ENCODE measurements at regions of chr9 and their contacts with region 1.

Region 1: GRCh38 chr9:97710356-97711222 is 13.4 kb upstream of the XPA start:
- DNase-seq: peak; percentile 44
- ATAC-seq: peak; percentile 92
- H3K4me3 ChIP-seq: no peak overlapping the region
- H3K27ac ChIP-seq: no peak overlapping the region
- H3K4me1 ChIP-seq: peaks cover 26% of the 10 kb centered on the region
- H3K27me3 ChIP-seq: no peaks in the 10 kb centered on the region
- CTCF ChIP-seq: peak; percentile 87
- EP300 ChIP-seq: no peak
- POLR2A ChIP-seq: no peak
- RAD21 ChIP-seq: peak; percentile 88

Region 2: DNA sequence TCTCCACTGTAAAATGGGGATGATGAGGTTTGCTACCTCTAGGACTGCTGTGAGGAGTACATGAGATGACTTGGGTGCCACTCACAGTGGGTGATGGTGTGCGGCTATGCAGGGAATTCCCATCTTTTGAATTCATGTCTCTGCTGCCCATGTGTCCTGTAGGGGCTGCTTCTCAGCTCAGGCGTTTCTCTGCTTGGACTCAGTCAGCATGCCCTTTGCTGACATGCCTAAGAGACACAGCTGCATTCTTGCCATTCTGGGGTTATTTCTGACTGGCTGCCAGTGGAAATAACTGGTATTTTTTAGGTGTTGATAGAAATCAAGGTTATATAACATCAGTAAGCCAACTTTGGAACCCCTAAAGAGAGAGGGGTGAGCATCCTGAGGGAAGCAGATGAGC is 10.8 kb after region 1 on chr9:
- CTCF ChIA-PET with region 1: no interaction called
- POLR2A ChIA-PET with region 1: no interaction called
- in situ Hi-C with region 1: no loop called
- intact Hi-C with region 1: no loop called
- DNase-seq: no peak
- ATAC-seq: no peak
- H3K4me3 ChIP-seq: no peak overlapping the region
- H3K27ac ChIP-seq: no peak overlapping the region
- H3K4me1 ChIP-seq: peaks cover 12% of the 10 kb centered on the region
- H3K27me3 ChIP-seq: no peaks in the 10 kb centered on the region
- CTCF ChIP-seq: no peak
- EP300 ChIP-seq: no peak
- POLR2A ChIP-seq: no peak
- RAD21 ChIP-seq: no peak

Region 3: GRCh38 chr9:97803167-97804058 is 92.8 kb after region 1 on chr9:
- CTCF ChIA-PET with region 1: interaction called, 5 read pairs
- POLR2A ChIA-PET with region 1: no interaction called
- in situ Hi-C with region 1: no loop called
- intact Hi-C with region 1: loop called (anchors 1 kb)
- DNase-seq: peak; percentile 33
- ATAC-seq: peak; percentile 95
- H3K4me3 ChIP-seq: peak overlapping the region; percentile 50 to 72 (median 55)
- H3K27ac ChIP-seq: no peak overlapping the region
- H3K4me1 ChIP-seq: peaks cover 14% of the 10 kb centered on the region
- H3K27me3 ChIP-seq: peaks cover 0 to 5% of the 10 kb centered on the region in 2 experiments; a peak in 3 of 5 replicates
- CTCF ChIP-seq: peak; percentile 42
- EP300 ChIP-seq: no peak
- POLR2A ChIP-seq: peak in 1 of 2 experiments; percentile 60; a peak in 2 of 4 replicates
- RAD21 ChIP-seq: peak; percentile 51

Region 4: GRCh38 chr9:97890038-97890437 is 179.4 kb after region 1 on chr9:
- CTCF ChIA-PET with region 1: no interaction called
- POLR2A ChIA-PET with region 1: no interaction called
- in situ Hi-C with region 1: loop called (anchors 5 kb)
- intact Hi-C with region 1: loop called (anchors 1 kb)
- DNase-seq: no peak
- ATAC-seq: peak; percentile 72
- H3K4me3 ChIP-seq: no peak overlapping the region
- H3K27ac ChIP-seq: no peak overlapping the region
- H3K4me1 ChIP-seq: no peaks in the 10 kb centered on the region
- H3K27me3 ChIP-seq: peaks cover 0 to 9% of the 10 kb centered on the region in 2 experiments; a peak in 1 of 5 replicates
- CTCF ChIP-seq: peak; percentile 57
- EP300 ChIP-seq: no peak
- POLR2A ChIP-seq: no peak
- RAD21 ChIP-seq: no peak

Region 5: DNA sequence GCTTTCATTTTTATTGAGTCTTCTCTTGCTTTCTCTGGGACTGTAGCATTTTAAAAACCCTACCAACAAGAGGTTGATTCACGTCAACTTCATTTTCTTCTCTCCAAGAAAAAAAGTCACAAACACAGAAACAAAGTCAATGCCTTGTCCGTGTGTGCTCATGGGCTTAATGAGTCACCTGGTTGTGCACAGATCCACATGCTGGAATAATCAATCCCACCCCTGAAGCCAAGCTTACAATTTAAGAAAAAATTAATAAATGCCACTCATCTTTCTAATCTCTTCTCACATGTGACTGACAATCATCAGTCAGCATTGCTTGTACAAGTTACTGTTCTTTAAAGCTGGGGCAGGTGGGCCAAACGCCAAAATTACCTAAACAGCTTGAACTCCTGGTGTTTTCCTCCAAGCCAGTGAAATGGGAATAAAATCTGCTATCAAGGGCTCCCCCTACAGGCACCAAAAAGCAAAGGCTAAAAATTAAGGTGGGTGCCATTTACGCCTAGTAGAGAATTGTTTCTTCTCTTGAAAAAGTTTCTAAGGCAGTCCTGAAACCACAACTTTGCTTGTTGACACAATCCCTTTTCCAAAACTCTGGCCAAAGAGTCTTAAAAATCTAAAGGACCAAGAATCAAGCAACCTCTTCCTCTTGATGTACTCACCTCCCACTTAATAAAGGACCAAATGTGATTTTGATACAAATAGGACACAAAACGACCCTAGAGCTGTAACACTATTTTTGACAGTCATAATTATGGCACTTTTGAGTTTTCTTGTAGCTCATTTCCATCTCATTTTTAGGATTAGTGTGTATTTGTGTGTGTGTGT is 190.4 kb after region 1 on chr9:
- CTCF ChIA-PET with region 1: interaction called, 22 read pairs
- POLR2A ChIA-PET with region 1: no interaction called
- in situ Hi-C with region 1: no loop called
- intact Hi-C with region 1: loop called (anchors 1 kb)
- DNase-seq: peak; percentile 28
- ATAC-seq: peak; percentile 66
- H3K4me3 ChIP-seq: no peak overlapping the region
- H3K27ac ChIP-seq: peak overlapping the region; percentile 7
- H3K4me1 ChIP-seq: peaks cover 8% of the 10 kb centered on the region
- H3K27me3 ChIP-seq: no peaks in the 10 kb centered on the region
- CTCF ChIP-seq: peak; percentile 73
- EP300 ChIP-seq: no peak
- POLR2A ChIP-seq: no peak
- RAD21 ChIP-seq: peak; percentile 51; the same call in 1 of the 2 replicates

Region 6: DNA sequence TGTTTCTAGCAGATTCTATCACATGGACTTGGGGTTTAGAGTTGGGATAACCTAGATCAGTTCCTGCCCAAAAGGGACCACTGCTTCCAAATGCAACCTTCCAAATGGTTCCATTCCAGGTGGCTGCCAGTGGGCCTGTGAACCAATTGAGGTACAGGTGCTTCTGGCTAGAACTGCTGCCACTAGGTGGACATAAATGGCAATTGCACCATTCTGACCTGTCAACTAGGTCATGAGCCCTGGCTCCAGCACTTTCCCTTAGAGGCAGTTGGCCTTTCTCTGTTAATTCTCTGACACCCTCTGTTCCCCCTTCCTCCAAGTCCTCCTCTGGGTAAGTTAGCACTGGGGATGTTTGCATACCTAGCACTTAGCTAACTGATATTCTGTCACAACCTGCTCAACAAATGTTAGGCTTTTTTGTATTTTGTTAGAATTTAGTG is 244.0 kb after region 1 on chr9:
- CTCF ChIA-PET with region 1: no interaction called
- POLR2A ChIA-PET with region 1: no interaction called
- in situ Hi-C with region 1: no loop called
- intact Hi-C with region 1: loop called (anchors 1 kb)
- DNase-seq: peak; percentile 52
- ATAC-seq: peak; percentile 96
- H3K4me3 ChIP-seq: no peak overlapping the region
- H3K27ac ChIP-seq: no peak overlapping the region
- H3K4me1 ChIP-seq: no peaks in the 10 kb centered on the region
- H3K27me3 ChIP-seq: peaks cover 0 to 4% of the 10 kb centered on the region in 2 experiments; a peak in 1 of 5 replicates
- CTCF ChIP-seq: peak; percentile 81
- EP300 ChIP-seq: no peak
- POLR2A ChIP-seq: no peak
- RAD21 ChIP-seq: peak; percentile 38; the same call in 1 of the 2 replicates